HEK293T (cell line): ENCODE measurements at regions of chr20 and their contacts with region 1.

Region 1: DNA sequence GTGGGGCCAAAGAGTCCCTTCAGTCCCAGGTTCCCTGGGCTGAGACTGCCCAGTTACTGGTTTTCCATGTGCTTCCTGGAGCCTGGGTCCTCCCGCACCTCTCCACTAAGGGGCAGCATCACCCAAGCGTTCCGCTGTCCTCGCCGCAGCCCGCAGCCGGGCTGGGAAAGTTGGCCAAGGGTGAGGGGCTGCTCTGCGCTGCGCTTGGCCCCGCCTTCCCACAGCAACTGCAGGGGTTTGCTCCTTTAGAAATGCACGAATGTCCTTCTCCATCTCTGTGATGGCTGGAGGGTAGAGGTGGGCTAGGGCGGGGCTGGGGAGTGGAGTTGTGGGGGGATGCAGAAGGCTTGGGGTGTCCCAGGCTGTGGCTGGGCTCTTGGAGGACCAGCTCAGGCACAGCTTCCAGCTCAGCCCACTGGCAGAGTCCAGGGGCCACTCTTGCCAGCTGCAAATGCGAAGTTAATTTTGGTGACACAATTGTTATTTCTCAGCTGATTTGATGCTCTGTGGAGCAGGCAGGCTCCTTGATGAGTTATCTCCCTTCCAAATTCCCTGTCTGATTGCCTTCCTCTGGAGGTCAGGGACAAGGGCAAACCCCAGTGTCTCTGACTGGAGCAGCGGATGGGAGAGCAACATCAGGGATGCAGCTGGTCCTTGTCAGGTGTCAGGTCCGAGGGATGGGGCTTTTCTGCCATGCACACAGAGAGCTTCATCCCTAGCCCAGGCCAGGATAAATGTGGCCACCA is 63.2 kb downstream of the NOL4L start:
- DNase-seq: peak; percentile 88

Region 2: DNA sequence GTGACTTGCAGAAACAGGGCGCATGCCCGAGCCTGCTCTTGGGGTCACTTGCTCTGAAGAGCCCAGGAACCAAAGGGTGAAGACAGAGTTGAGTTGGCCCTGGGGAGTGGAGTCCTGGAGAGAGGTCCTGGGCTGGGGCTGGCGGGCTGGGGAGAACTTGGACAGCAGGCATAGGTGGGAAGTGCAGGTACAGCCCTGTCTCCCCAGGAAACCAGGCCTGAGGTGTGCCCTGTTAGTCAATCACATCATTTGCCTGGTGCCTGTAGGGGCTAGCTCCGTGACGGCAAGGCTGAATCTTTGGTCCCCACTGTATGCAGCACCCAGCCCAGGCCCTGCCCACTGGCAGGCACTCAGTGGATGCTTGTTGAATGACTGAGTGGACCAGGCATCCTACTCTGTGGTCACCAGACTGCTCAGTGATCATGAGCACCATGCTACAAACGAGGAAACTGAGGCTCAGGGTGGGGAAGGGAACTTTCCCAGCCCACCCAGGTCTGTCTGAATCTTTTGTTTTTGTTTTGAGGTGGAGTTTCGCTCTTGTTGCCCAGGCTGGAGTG is 78.8 kb after region 1 on chr20:
- CTCF ChIA-PET with region 1: no interaction called
- POLR2A ChIA-PET with region 1: no interaction called
- DNase-seq: no peak

Region 3: GRCh38 chr20:32652739-32653526 is 131.0 kb after region 1 on chr20:
- CTCF ChIA-PET with region 1: interaction called, 48 read pairs
- POLR2A ChIA-PET with region 1: interaction called, 8 read pairs
- DNase-seq: peak; percentile 90